Panc1 (cell line): ENCODE measurements at regions of chr6 and their contacts with region 1.

Region 1: GRCh38 chr6:111406200-111406721 is 76.8 kb downstream of the REV3L start:
- DNase-seq: no peak
- ATAC-seq: peak; percentile 12; the same call in 1 of the 2 replicates
- H3K4me3 ChIP-seq: no peak overlapping the region
- H3K27ac ChIP-seq: no peak overlapping the region
- H3K4me1 ChIP-seq: no peaks in the 10 kb centered on the region
- H3K27me3 ChIP-seq: no peaks in the 10 kb centered on the region
- CTCF ChIP-seq: no peak

Region 2: GRCh38 chr6:110897433-110897832 is 508.8 kb before region 1 on chr6:
- CTCF ChIA-PET with region 1: no interaction called
- POLR2A ChIA-PET with region 1: no interaction called
- in situ Hi-C with region 1: no loop called
- intact Hi-C with region 1: no loop called
- DNase-seq: no peak
- ATAC-seq: no peak
- H3K4me3 ChIP-seq: no peak overlapping the region
- H3K27ac ChIP-seq: no peak overlapping the region
- H3K4me1 ChIP-seq: no peaks in the 10 kb centered on the region
- H3K27me3 ChIP-seq: no peaks in the 10 kb centered on the region
- CTCF ChIP-seq: no peak

Region 3: GRCh38 chr6:111388681-111389080 is 17.6 kb before region 1 on chr6:
- CTCF ChIA-PET with region 1: no interaction called
- POLR2A ChIA-PET with region 1: interaction called, 15 read pairs
- in situ Hi-C with region 1: no loop called
- intact Hi-C with region 1: no loop called
- DNase-seq: no peak
- ATAC-seq: no peak
- H3K4me3 ChIP-seq: no peak overlapping the region
- H3K27ac ChIP-seq: no peak overlapping the region
- H3K4me1 ChIP-seq: no peaks in the 10 kb centered on the region
- H3K27me3 ChIP-seq: no peaks in the 10 kb centered on the region
- CTCF ChIP-seq: no peak